Activated CD4-positive, alpha-beta T cell treated with anti-CD3 and anti-CD28 coated beads, Interleukin-2, amount 10 ng/mL, durations not matched to agents 24 days and 14 days (primary cell): ENCODE measurements at regions of chr10 and their contacts with region 1.

Region 1: DNA sequence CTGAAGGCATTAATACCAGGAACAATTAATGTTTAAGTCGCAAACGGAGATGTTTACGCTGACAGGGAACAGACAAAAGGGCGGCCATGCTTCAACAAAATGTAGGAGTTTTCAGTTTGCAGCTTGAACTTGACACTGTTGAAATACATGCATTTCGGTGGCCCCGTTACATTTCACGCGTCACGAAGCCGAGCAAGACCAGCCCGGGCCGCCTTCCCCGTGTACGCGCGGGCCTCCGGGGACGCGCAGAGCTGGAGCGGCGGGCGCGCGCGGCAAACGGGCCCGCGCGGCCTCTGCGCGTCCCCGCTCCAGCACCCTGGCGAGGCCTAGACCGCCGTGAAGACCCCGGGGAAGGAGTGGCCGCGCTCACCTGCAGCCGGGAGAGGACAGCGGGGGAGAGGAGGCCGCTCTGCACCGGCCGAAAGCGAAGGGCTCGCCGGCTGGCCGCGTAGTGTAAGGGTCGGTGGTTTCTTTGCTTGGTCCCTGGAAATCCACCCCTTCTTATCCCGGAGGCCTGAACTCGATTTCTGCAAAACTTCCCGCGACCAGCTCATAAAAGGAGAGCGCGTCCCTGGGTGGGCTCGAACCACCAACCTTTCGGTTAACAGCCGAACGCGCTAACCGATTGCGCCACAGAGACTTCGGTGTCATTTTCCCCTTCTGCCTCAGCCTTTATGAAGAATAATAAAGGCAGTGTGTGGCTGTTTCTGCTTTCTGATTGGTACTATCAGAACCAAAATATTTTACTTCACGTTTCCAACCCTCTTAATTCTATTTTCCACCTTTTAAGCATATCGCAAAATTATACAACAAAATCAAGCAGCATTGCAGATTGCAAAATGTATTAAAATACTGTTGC is 11.4 kb upstream of the EBLN1 start:
- DNase-seq: peak; percentile 96
- H3K4me3 Mint-ChIP-seq: peak overlapping the region; percentile 84
- H3K27ac Mint-ChIP-seq: peak overlapping the region; percentile 92
- H3K4me1 Mint-ChIP-seq: peaks cover 21% of the 10 kb centered on the region
- H3K27me3 Mint-ChIP-seq: peaks cover 14% of the 10 kb centered on the region

Region 2: GRCh38 chr10:21533467-21534279 is 695.5 kb before region 1 on chr10 and contains the start of gene MLLT10:
- intact Hi-C with region 1: loop called (anchors 1 kb)
- DNase-seq: peak; percentile 97
- H3K4me3 Mint-ChIP-seq: peak within 1 kb of the TSS; percentile 88
- H3K27ac Mint-ChIP-seq: peak within 1 kb of the TSS; percentile 93
- H3K4me1 Mint-ChIP-seq: peaks cover 23% of the 10 kb centered on the region
- H3K27me3 Mint-ChIP-seq: peaks cover 14% of the 10 kb centered on the region
- total RNA-seq, gene MLLT10: 40.2 and 42.0 TPM in 2 replicates

Region 3: GRCh38 chr10:22251751-22252223 is 22.6 kb after region 1 on chr10:
- intact Hi-C with region 1: loop called (anchors 1 kb)
- DNase-seq: peak; percentile 91
- H3K4me3 Mint-ChIP-seq: peak overlapping the region; percentile 91
- H3K27ac Mint-ChIP-seq: peak overlapping the region; percentile 98
- H3K4me1 Mint-ChIP-seq: peaks cover 31% of the 10 kb centered on the region
- H3K27me3 Mint-ChIP-seq: peaks cover 14% of the 10 kb centered on the region

Region 4: DNA sequence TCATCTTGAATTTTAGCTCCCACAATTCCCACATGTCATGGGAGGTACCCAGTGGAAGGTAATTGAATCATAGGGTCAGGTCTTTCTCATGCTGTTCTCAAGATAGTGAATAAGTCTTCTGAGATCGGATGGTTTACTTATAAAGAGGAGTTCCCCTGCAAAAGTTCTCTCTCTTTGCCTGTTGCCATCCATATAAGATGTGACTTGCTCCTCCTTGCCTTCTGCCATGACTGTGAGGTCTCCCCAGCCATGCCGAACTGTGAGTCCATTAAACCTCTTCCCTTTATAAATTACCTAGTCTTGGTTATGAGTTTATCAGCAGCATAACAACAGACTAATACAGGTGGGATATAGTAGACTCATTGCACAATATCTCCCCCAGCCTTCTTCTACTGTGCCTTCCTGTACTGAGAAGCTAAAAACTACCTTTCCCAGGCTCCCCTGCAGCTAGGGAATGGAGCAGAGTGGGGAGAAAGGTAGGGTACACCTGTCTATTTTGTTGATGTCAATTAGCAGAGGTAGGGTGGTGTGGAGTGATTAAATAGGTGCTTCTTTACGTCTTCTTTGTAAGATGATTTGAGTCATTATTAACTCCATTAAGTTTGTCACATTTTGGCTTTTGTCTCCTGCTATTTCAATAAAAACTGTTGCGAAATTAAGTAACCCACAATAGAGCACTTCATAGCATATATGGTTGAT is 36.8 kb after region 1 on chr10:
- intact Hi-C with region 1: no loop called
- DNase-seq: no peak
- H3K4me3 Mint-ChIP-seq: no peak overlapping the region
- H3K27ac Mint-ChIP-seq: no peak overlapping the region
- H3K4me1 Mint-ChIP-seq: peaks cover 2% of the 10 kb centered on the region
- H3K27me3 Mint-ChIP-seq: peaks cover 31% of the 10 kb centered on the region

Region 5: GRCh38 chr10:22308390-22308789 is 79.2 kb after region 1 on chr10:
- intact Hi-C with region 1: loop called (anchors 1 kb)
- DNase-seq: peak; percentile 79
- H3K4me3 Mint-ChIP-seq: no peak overlapping the region
- H3K27ac Mint-ChIP-seq: no peak overlapping the region
- H3K4me1 Mint-ChIP-seq: peaks cover 10% of the 10 kb centered on the region
- H3K27me3 Mint-ChIP-seq: peaks cover 2% of the 10 kb centered on the region

Region 6: DNA sequence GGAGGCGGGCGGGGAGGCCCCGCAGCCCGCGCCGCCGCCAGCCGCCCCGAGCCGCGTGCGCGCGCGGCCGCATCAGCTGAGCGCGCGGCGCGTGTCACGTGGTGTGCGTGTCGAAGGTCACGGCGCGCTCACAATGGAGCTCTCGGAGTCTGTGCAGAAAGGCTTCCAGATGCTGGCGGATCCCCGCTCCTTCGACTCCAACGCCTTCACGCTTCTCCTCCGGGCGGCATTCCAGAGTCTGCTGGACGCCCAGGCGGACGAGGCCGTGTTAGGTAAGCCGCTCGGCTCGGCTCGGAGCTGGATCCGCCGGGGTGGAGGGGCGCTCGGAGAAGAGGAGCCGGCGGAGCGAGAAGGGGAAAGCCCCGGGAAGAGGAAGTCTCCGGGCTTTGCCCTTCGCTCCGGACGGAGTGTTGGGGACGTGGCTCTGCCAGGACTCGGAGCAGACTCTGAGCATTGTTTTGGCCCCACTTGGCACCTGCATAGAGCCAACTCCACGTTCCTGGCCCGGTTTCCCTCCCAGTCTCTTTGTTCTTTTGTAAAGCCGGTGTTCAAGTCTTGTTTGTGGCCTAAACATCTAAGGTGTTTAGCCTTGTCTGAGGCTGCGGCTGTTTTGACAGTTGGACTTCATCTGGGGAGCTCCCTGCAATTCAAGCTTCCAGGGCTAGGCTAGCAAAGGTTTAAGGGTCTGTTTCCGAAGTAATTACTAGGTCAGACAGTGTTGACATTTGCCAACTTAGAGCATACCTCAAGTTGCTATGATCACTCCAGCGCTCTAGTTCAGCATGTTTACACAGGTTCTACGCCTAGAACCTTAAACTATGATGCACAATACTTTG is 87.3 kb after region 1 on chr10 and contains the start of gene COMMD3:
- intact Hi-C with region 1: loop called (anchors 1 kb)
- DNase-seq: peak; percentile 95
- H3K4me3 Mint-ChIP-seq: peak within 1 kb of the TSS; percentile 87
- H3K27ac Mint-ChIP-seq: peak within 1 kb of the TSS; percentile 94
- H3K4me1 Mint-ChIP-seq: peaks cover 29% of the 10 kb centered on the region
- H3K27me3 Mint-ChIP-seq: no peaks in the 10 kb centered on the region
- total RNA-seq, gene COMMD3: 76.7 and 79.7 TPM in 2 replicates